Natural killer cell (primary cell): ENCODE measurements at regions of chr15 and their contacts with region 1.

Region 1: GRCh38 chr15:39624806-39625205 is 43.9 kb downstream of the THBS1 start:
- DNase-seq: peak; percentile 75 to 87
- ATAC-seq: peak; percentile 57 to 83 (median 77)
- H3K4me3 ChIP-seq: no peak overlapping the region
- H3K4me3 Mint-ChIP-seq: peak overlapping the region; percentile 97
- H3K27ac ChIP-seq: peak overlapping the region; percentile 100
- H3K27ac Mint-ChIP-seq: peak overlapping the region; percentile 100
- H3K4me1 ChIP-seq: peaks cover 75% of the 10 kb centered on the region
- H3K4me1 Mint-ChIP-seq: peaks cover 92 to 93% of the 10 kb centered on the region in 2 donors
- H3K27me3 ChIP-seq: no peaks in the 10 kb centered on the region
- H3K27me3 Mint-ChIP-seq: no peaks in the 10 kb centered on the region
- CTCF ChIP-seq: no peak

Region 2: DNA sequence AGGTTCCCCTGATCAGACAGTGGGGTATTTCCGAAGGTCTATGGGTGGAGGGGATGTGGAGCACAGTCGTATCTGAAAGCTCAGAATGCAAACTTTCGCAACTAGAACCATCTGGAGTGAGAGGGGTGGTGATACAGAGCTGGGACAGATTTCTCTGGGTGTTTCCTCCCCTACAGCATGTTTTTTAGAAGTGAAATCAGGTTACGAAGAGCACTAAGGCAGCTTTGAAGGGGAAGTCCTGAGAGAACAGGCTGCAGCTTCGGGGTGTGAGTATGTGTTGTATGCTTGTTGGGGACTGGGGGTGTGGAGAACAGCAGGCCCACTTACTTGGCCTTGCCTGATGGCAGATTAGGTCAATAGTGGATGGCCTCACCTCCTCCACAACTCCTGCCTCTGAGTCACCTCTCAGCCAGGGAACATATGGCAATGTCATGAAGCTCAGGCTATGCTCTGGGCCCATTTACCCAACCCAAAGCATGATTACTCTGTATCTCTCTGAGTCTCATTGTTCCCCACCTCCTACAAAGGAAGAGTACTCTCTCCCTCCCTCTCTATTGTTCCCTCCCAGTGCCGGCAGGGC is 953.0 kb before region 1 on chr15:
- intact Hi-C with region 1: loop called (anchors 2 kb)
- DNase-seq: peak; percentile 36 to 90
- ATAC-seq: peak; percentile 54 to 71 (median 61)
- H3K4me3 ChIP-seq: no peak overlapping the region
- H3K4me3 Mint-ChIP-seq: peak overlapping the region; percentile 8
- H3K27ac ChIP-seq: peak overlapping the region; percentile 98
- H3K27ac Mint-ChIP-seq: peak overlapping the region; percentile 97 to 98
- H3K4me1 ChIP-seq: peaks cover 50% of the 10 kb centered on the region
- H3K4me1 Mint-ChIP-seq: peaks cover 56 to 57% of the 10 kb centered on the region in 2 donors
- H3K27me3 ChIP-seq: no peaks in the 10 kb centered on the region
- H3K27me3 Mint-ChIP-seq: no peaks in the 10 kb centered on the region
- CTCF ChIP-seq: no peak

Region 3: GRCh38 chr15:39580117-39580484 is 44.7 kb before region 1 on chr15:
- intact Hi-C with region 1: loop called (anchors 2 kb)
- DNase-seq: peak; percentile 86 to 94
- ATAC-seq: peak; percentile 93 to 96 (median 94)
- H3K4me3 ChIP-seq: peak overlapping the region; percentile 47
- H3K4me3 Mint-ChIP-seq: peak overlapping the region; percentile 78
- H3K27ac ChIP-seq: no peak overlapping the region
- H3K27ac Mint-ChIP-seq: peak overlapping the region; percentile 37 to 76
- H3K4me1 ChIP-seq: peaks cover 30% of the 10 kb centered on the region
- H3K4me1 Mint-ChIP-seq: peaks cover 29 to 48% of the 10 kb centered on the region in 2 donors
- H3K27me3 ChIP-seq: peaks cover 5% of the 10 kb centered on the region
- H3K27me3 Mint-ChIP-seq: peaks cover 8 to 23% of the 10 kb centered on the region in 2 donors
- CTCF ChIP-seq: peak; percentile 98

Region 4: DNA sequence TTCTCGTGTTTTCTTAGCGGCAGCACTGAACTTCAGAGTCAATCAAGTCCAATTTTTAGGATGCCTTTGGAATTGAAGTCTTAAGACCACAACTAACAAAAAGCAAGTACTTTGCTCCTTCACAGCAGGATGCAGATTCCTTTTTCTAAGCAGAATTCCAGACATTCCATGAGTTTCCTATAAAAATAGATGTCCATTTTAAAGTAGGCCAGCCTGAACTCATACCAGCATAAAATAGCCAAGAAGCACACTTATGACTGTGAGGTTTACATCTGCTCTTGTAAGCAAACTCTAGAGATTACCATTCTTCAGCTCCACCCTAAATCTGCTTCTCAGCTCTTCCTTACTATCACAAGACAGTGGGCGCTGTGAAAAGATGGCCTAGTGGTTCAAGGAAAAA is 41.9 kb after region 1 on chr15:
- intact Hi-C with region 1: loop called (anchors 2 kb)
- DNase-seq: no peak
- ATAC-seq: no peak
- H3K4me3 ChIP-seq: no peak overlapping the region
- H3K4me3 Mint-ChIP-seq: no peak overlapping the region
- H3K27ac ChIP-seq: no peak overlapping the region
- H3K27ac Mint-ChIP-seq: peak overlapping the region in 1 of 2 donors; percentile 66
- H3K4me1 ChIP-seq: no peaks in the 10 kb centered on the region
- H3K4me1 Mint-ChIP-seq: peaks cover 39 to 53% of the 10 kb centered on the region in 2 donors
- H3K27me3 ChIP-seq: no peaks in the 10 kb centered on the region
- H3K27me3 Mint-ChIP-seq: no peaks in the 10 kb centered on the region
- CTCF ChIP-seq: no peak

Region 5: GRCh38 chr15:39756806-39757522 is 132.2 kb after region 1 on chr15:
- intact Hi-C with region 1: loop called (anchors 5 kb)
- DNase-seq: peak in 1 of 2 donors; percentile 79
- ATAC-seq: peak in 1 of 3 donors; percentile 53
- H3K4me3 ChIP-seq: no peak overlapping the region
- H3K4me3 Mint-ChIP-seq: no peak overlapping the region
- H3K27ac ChIP-seq: no peak overlapping the region
- H3K27ac Mint-ChIP-seq: no peak overlapping the region
- H3K4me1 ChIP-seq: no peaks in the 10 kb centered on the region
- H3K4me1 Mint-ChIP-seq: no peaks in the 10 kb centered on the region
- H3K27me3 ChIP-seq: no peaks in the 10 kb centered on the region
- H3K27me3 Mint-ChIP-seq: no peaks in the 10 kb centered on the region
- CTCF ChIP-seq: peak; percentile 88